MCF 10A (cell line): ENCODE measurements at regions of chr2 and their contacts with region 1.

Region 1: GRCh38 chr2:19538405-19538963 is 180.1 kb upstream of the OSR1 start:
- DNase-seq: peak; percentile 98
- H3K4me3 Mint-ChIP-seq: peak overlapping the region; percentile 50
- H3K27ac Mint-ChIP-seq: peak overlapping the region; percentile 93
- H3K4me1 Mint-ChIP-seq: peaks cover 57% of the 10 kb centered on the region
- H3K27me3 Mint-ChIP-seq: no peaks in the 10 kb centered on the region
- CTCF ChIP-seq: no peak

Region 2: GRCh38 chr2:19377717-19378116 is 160.8 kb before region 1 on chr2:
- CTCF ChIA-PET with region 1: no interaction called
- POLR2A ChIA-PET with region 1: no interaction called
- intact Hi-C with region 1: loop called (anchors 10 kb)
- DNase-seq: no peak
- H3K4me3 Mint-ChIP-seq: no peak overlapping the region
- H3K27ac Mint-ChIP-seq: no peak overlapping the region
- H3K4me1 Mint-ChIP-seq: no peaks in the 10 kb centered on the region
- H3K27me3 Mint-ChIP-seq: no peaks in the 10 kb centered on the region
- CTCF ChIP-seq: no peak

Region 3: DNA sequence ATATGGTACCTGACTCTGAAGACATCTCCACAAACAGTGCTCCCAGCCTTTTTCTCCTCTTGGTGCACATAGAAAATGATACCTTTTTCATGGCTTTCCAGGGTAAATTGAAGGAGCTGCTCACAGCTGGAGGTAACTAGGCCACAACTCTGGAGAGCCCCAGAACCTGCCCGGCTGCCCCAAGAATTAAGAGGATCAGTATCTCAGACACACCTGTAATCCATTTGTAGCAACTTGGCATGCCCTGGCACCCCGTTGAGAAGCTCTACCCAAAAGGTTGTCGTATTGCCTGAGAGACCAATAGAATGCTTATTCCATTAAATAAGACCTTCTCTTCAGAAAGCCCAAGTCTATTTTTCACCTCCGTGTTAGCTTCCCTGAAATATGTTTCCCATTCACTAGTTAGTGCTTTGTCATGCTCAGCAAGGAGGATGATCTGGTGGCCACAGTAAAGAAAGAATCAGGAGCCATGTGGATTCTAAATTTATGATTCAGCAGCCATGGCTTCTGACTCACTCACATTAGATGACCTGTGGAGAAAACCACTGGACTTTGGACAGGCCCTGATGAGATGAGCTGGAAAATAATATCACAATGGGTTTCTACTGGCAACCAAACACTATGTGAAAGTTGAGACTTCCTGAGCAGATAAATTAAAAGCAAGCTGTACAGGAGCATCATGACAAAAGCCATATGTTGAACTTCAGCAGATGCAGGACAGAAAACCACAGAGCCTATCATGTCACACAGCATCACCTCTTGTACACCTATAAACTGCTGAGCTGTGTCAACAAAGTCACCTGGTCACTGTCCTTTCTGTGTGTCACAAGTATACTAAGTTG is 73.2 kb after region 1 on chr2:
- CTCF ChIA-PET with region 1: no interaction called
- POLR2A ChIA-PET with region 1: no interaction called
- intact Hi-C with region 1: loop called (anchors 2 kb)
- DNase-seq: peak; percentile 82
- H3K4me3 Mint-ChIP-seq: no peak overlapping the region
- H3K27ac Mint-ChIP-seq: peak overlapping the region; percentile 32
- H3K4me1 Mint-ChIP-seq: peaks cover 21% of the 10 kb centered on the region
- H3K27me3 Mint-ChIP-seq: no peaks in the 10 kb centered on the region
- CTCF ChIP-seq: no peak

Region 4: DNA sequence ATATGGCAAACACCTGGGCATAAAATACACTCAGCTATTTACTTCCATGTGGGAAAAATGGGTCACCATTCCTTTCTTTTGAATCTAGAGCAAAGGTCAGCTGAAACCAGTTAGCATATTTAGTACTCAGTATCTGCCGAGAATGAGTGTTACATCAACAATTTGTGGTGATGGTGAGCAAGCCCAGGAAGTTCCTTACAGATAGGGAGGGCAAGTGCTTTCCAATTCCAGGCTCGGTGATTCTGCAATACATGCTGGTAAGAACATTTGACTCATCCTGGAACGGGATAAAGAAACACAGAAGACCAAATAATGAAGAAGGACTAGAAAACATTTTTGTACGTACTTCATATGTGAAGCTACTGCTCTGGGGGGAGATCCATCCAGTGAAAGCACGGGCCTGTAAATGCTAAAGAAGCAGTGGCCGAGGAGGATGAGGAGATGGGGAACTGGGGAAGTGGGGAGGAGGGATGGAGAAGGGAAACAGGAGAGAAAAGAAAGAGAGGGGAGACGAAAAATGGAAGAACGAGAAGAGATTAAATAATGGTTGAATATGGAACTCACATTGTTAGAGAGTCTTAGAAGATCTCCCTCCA is 111.4 kb after region 1 on chr2:
- CTCF ChIA-PET with region 1: interaction called, 4 read pairs
- POLR2A ChIA-PET with region 1: interaction called, 18 read pairs
- intact Hi-C with region 1: loop called (anchors 1 kb)
- DNase-seq: peak; percentile 98
- H3K4me3 Mint-ChIP-seq: peak overlapping the region; percentile 67
- H3K27ac Mint-ChIP-seq: peak overlapping the region; percentile 98
- H3K4me1 Mint-ChIP-seq: peaks cover 40% of the 10 kb centered on the region
- H3K27me3 Mint-ChIP-seq: no peaks in the 10 kb centered on the region
- CTCF ChIP-seq: no peak

Region 5: DNA sequence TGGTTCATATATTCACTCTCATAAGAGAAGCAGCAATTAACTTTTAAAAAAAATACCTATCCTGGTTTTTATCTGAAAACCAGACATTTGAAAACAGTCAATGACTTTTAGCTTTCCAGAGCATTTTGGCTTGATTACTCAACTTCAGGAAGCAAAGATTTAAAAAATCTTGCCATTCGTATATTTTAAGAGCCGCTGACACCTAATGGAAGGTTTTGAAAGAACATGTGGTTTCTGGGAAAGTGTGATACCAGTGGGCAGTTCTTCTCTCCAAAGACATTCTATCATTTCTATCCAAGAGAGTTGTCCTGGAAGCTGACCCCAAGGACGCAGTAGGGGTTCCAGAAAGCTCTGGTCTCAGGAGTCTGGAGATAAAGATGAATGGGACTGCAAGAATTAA is 128.6 kb after region 1 on chr2:
- CTCF ChIA-PET with region 1: interaction called, 6 read pairs
- POLR2A ChIA-PET with region 1: interaction called, 3 read pairs
- intact Hi-C with region 1: loop called (anchors 1 kb)
- DNase-seq: peak; percentile 59
- H3K4me3 Mint-ChIP-seq: no peak overlapping the region
- H3K27ac Mint-ChIP-seq: no peak overlapping the region
- H3K4me1 Mint-ChIP-seq: no peaks in the 10 kb centered on the region
- H3K27me3 Mint-ChIP-seq: no peaks in the 10 kb centered on the region
- CTCF ChIP-seq: peak; percentile 60

Region 6: GRCh38 chr2:19711470-19712372 is 173.2 kb after region 1 on chr2:
- CTCF ChIA-PET with region 1: no interaction called
- POLR2A ChIA-PET with region 1: interaction called, 3 read pairs
- intact Hi-C with region 1: loop called (anchors 1 kb)
- DNase-seq: peak; percentile 86
- H3K4me3 Mint-ChIP-seq: no peak overlapping the region
- H3K27ac Mint-ChIP-seq: peak overlapping the region; percentile 47
- H3K4me1 Mint-ChIP-seq: peaks cover 20% of the 10 kb centered on the region
- H3K27me3 Mint-ChIP-seq: no peaks in the 10 kb centered on the region
- CTCF ChIP-seq: no peak

Region 7: DNA sequence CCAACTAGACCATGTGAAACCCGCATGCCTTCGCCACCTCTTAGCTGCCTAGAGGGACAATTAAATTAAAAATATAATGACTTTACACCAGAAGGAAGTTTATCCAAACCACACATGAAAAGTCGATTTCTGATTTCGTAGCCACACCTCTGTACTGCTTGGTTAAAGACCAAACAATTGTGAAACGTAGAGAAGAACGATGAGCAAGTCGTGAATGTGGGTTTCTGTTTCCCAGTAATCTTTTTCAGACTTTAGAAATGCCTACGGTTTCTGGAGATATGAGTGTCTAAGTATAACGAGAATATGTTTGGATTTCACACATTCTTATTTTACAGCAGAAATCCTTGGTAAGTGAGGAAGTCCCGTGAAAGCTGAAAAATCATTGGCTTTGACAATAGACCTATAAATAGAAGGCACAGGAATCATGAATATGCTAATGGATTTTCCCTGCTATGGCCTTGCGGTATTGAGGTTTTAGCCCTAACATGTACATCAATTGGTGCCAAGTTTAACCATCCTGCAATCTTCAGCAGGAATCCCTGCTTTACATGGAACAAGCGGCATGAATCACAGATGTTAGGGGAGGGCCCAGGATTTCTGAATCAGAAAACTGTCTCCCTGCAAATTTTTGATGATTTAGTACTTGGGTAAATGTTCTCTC is 257.7 kb after region 1 on chr2:
- CTCF ChIA-PET with region 1: no interaction called
- POLR2A ChIA-PET with region 1: interaction called, 3 read pairs
- intact Hi-C with region 1: loop called (anchors 5 kb)
- DNase-seq: peak; percentile 92
- H3K4me3 Mint-ChIP-seq: peak overlapping the region; percentile 53
- H3K27ac Mint-ChIP-seq: peak overlapping the region; percentile 80
- H3K4me1 Mint-ChIP-seq: peaks cover 48% of the 10 kb centered on the region
- H3K27me3 Mint-ChIP-seq: peaks cover 13% of the 10 kb centered on the region
- CTCF ChIP-seq: no peak